ENCODE measurements at regions of chr4 and their contacts with region 1.

Region 1: GRCh38 chr4:87209696-87210095 is 10.7 kb downstream of the KLHL8 start:
- DNase-seq: no peak
- ATAC-seq: no peak
- H3K4me3 ChIP-seq: no peak overlapping the region
- H3K27ac ChIP-seq: no peak overlapping the region
- H3K4me1 ChIP-seq: peaks cover 7% of the 10 kb centered on the region
- H3K27me3 ChIP-seq: no peaks in the 10 kb centered on the region
- CTCF ChIP-seq: no peak
- POLR2A ChIP-seq: no peak
- RAD21 ChIP-seq: no peak

Region 2: DNA sequence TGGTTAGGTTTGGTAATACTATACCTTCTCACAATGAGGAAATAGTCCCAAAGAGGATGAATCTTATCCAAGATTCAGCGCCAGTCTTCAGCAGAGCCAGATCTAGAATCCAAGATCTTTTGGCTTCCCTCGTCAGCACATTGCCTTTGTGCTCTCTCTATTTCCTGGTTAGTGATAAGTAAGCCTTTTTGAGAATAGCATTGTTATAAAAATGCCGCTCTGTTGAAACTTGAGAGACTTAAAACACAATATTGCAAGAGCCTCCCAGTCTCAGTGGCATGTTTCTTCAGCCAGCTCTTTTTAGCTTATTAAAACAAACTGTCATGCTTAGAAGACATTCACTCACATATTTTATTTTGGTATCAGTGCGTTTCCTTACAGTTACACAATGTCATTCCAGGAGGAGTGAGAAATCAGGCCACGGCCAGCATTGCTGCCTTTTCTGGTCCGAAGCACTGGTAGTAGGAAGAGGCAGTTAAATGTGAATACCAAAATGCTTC is 130.7 kb before region 1 on chr4:
- CTCF ChIA-PET with region 1: no interaction called
- POLR2A ChIA-PET with region 1: no interaction called
- dilution Hi-C with region 1: no loop called
- in situ Hi-C with region 1: no loop called
- intact Hi-C with region 1: no loop called
- DNase-seq: peak; percentile 88
- ATAC-seq: peak; percentile 90
- H3K4me3 ChIP-seq: no peak overlapping the region; the same call in 1 of the 2 replicates
- H3K27ac ChIP-seq: peak overlapping the region; percentile 73
- H3K4me1 ChIP-seq: peaks cover 10% of the 10 kb centered on the region
- H3K27me3 ChIP-seq: no peaks in the 10 kb centered on the region
- CTCF ChIP-seq: no peak
- POLR2A ChIP-seq: no peak
- RAD21 ChIP-seq: peak; percentile 9; the same call in 1 of the 2 replicates

Region 3: GRCh38 chr4:87179751-87180150 is 29.9 kb before region 1 on chr4:
- CTCF ChIA-PET with region 1: no interaction called
- POLR2A ChIA-PET with region 1: no interaction called
- dilution Hi-C with region 1: no loop called
- in situ Hi-C with region 1: no loop called
- intact Hi-C with region 1: loop called (anchors 5 kb)
- DNase-seq: peak; percentile 67
- ATAC-seq: peak; percentile 48
- H3K4me3 ChIP-seq: no peak overlapping the region
- H3K27ac ChIP-seq: no peak overlapping the region
- H3K4me1 ChIP-seq: no peaks in the 10 kb centered on the region
- H3K27me3 ChIP-seq: no peaks in the 10 kb centered on the region
- CTCF ChIP-seq: no peak
- POLR2A ChIP-seq: no peak
- RAD21 ChIP-seq: no peak

Measured in IMR-90 (cell line).